Ascending aorta (tissue), 2 donors: ENCODE measurements at regions of chr2 and their contacts with region 1.

Region 1: GRCh38 chr2:179218848-179219594 is 45.6 kb downstream of the SESTD1 start:
- DNase-seq: peak in 1 of 2 donors; percentile 88
- H3K4me3 ChIP-seq: no peak overlapping the region
- H3K27ac ChIP-seq: no peak overlapping the region
- H3K4me1 ChIP-seq: peaks cover 4 to 19% of the 10 kb centered on the region in 2 donors
- H3K27me3 ChIP-seq: no peaks in the 10 kb centered on the region
- CTCF ChIP-seq: peak; percentile 70 to 92 (median 71)

Region 2: DNA sequence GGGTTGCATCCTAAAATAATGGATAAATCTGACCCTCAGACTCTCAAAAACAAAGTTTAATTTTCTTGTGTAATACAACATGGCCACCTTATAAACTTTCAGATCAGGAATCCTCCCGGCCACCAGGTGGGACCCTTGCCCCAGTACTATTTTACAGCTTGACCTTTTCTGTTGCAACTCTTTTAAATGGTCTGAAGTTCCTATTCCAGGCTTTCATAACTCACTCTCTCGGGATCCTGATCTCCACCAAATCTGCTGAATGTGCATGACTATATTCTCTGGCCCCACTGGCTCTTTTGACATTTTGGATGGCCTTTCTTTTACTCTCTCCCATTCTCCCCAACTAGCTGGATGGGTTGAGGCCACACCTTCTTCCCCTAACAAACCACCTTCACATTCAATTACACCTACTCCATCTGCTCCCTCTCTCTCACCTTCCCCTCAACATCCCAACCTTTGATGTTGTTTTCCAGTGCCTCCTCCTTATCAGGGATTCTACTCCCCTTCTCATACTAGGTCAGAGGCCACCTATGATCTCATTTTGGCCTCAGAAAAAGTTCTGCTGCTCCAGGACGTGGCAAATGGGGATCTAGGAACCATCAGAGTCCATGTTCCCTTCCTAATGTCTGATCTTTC is 25.1 kb before region 1 on chr2:
- intact Hi-C with region 1: loop called (anchors 1 kb)
- DNase-seq: no peak
- H3K4me3 ChIP-seq: no peak overlapping the region
- H3K27ac ChIP-seq: no peak overlapping the region
- H3K4me1 ChIP-seq: peaks cover 0 to 9% of the 10 kb centered on the region in 2 donors
- H3K27me3 ChIP-seq: no peaks in the 10 kb centered on the region
- CTCF ChIP-seq: no peak

Region 3: GRCh38 chr2:179264368-179265081 is 45.5 kb after region 1 on chr2 and contains the start of gene SESTD1:
- intact Hi-C with region 1: loop called (anchors 5 kb)
- DNase-seq: peak in 1 of 2 donors; percentile 87
- H3K4me3 ChIP-seq: peak within 1 kb of the TSS; percentile 84 to 98
- H3K27ac ChIP-seq: peak within 1 kb of the TSS; percentile 92 to 94
- H3K4me1 ChIP-seq: peaks cover 0 to 27% of the 10 kb centered on the region in 2 donors
- H3K27me3 ChIP-seq: no peaks in the 10 kb centered on the region
- CTCF ChIP-seq: peak in 1 of 3 experiments; percentile 36
- total RNA-seq, gene SESTD1: 15.4 TPM

Region 4: DNA sequence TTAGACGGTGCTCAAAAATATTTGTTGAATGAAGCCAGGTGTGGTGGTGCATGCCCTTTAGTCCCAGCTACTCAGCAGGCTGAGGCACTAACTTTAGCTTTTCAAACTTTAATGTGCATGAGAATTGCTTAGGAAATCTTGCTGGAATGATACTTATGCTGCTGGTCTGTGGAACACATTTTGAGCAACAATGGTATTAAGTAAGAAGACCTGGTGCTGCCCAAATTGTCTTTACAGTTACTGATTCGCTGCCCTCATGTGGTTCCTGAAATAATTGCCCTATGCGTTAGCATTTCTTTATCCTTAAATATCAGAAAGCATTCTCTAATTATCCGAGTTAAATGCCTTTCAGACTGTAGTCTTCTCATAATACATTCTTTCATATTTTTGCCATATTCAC is 121.6 kb after region 1 on chr2:
- intact Hi-C with region 1: loop called (anchors 5 kb)
- DNase-seq: no peak
- H3K4me3 ChIP-seq: no peak overlapping the region
- H3K27ac ChIP-seq: peak overlapping the region in 1 of 2 donors; percentile 4
- H3K4me1 ChIP-seq: peaks cover 4 to 25% of the 10 kb centered on the region in 2 donors
- H3K27me3 ChIP-seq: no peaks in the 10 kb centered on the region
- CTCF ChIP-seq: peak in 1 of 3 experiments; percentile 6

Region 5: DNA sequence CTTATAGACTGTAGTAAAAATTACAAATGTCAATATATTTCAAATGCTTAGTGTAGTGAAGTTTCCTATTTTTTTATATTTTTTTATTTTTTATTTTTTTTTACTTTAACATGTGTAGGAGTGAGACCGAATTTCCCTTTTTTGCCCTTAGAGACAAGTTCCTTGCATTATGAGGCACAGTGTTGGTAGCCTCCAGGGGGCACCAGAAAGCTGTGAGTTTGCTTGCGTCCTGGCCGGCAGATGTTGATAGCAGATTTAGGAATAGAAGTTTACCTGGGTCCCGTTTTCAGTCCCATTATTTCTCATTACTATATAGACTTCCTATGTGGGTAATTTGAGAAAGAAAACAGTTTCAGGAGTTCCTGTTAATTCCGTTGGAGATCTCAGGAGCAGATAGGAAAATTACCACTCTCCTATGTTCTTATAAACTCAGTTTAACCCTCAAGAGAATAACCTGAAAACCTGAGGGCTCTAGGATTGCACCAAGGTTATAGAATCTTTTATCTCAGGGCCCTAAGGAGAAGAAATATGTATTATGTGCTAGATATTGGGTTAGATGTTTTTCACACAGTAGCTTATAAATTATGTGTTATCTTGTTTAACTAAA is 203.1 kb after region 1 on chr2:
- intact Hi-C with region 1: loop called (anchors 5 kb)
- DNase-seq: peak in 1 of 2 donors; percentile 81
- H3K4me3 ChIP-seq: no peak overlapping the region
- H3K27ac ChIP-seq: no peak overlapping the region
- H3K4me1 ChIP-seq: no peaks in the 10 kb centered on the region
- H3K27me3 ChIP-seq: no peaks in the 10 kb centered on the region
- CTCF ChIP-seq: peak; percentile 45 to 70 (median 66)

Region 6: GRCh38 chr2:179440642-179441251 is 221.7 kb after region 1 on chr2:
- intact Hi-C with region 1: loop called (anchors 5 kb)
- DNase-seq: no peak
- H3K4me3 ChIP-seq: no peak overlapping the region
- H3K27ac ChIP-seq: no peak overlapping the region
- H3K4me1 ChIP-seq: no peaks in the 10 kb centered on the region
- H3K27me3 ChIP-seq: no peaks in the 10 kb centered on the region
- CTCF ChIP-seq: peak in 2 of 3 experiments; percentile 48 to 58